T-cell (primary cell): ENCODE measurements at regions of chr10 and their contacts with region 1.

Region 1: GRCh38 chr10:56507033-56507432 is 146.0 kb upstream of the ZWINT start:
- DNase-seq: no peak
- ATAC-seq: no peak
- H3K4me3 ChIP-seq: no peak overlapping the region
- H3K4me3 Mint-ChIP-seq: no peak overlapping the region
- H3K27ac ChIP-seq: no peak overlapping the region
- H3K27ac Mint-ChIP-seq: no peak overlapping the region
- H3K4me1 ChIP-seq: no peaks in the 10 kb centered on the region
- H3K4me1 Mint-ChIP-seq: no peaks in the 10 kb centered on the region
- H3K27me3 ChIP-seq: no peaks in the 10 kb centered on the region
- H3K27me3 Mint-ChIP-seq: no peaks in the 10 kb centered on the region

Region 2: GRCh38 chr10:57716886-57717285 is 1209.9 kb after region 1 on chr10:
- CTCF ChIA-PET with region 1: no interaction called
- POLR2A ChIA-PET with region 1: interaction called in 1 of 2 experiments, 12 read pairs
- DNase-seq: no peak
- ATAC-seq: no peak
- H3K4me3 ChIP-seq: no peak overlapping the region
- H3K4me3 Mint-ChIP-seq: no peak overlapping the region
- H3K27ac ChIP-seq: no peak overlapping the region
- H3K27ac Mint-ChIP-seq: no peak overlapping the region
- H3K4me1 ChIP-seq: no peaks in the 10 kb centered on the region
- H3K4me1 Mint-ChIP-seq: no peaks in the 10 kb centered on the region
- H3K27me3 ChIP-seq: no peaks in the 10 kb centered on the region
- H3K27me3 Mint-ChIP-seq: peaks cover 0 to 4% of the 10 kb centered on the region in 2 donors